Posterior cingulate gyrus (tissue), 11 donors: ENCODE measurements at regions of chr4 and their contacts with region 1.

Region 1: DNA sequence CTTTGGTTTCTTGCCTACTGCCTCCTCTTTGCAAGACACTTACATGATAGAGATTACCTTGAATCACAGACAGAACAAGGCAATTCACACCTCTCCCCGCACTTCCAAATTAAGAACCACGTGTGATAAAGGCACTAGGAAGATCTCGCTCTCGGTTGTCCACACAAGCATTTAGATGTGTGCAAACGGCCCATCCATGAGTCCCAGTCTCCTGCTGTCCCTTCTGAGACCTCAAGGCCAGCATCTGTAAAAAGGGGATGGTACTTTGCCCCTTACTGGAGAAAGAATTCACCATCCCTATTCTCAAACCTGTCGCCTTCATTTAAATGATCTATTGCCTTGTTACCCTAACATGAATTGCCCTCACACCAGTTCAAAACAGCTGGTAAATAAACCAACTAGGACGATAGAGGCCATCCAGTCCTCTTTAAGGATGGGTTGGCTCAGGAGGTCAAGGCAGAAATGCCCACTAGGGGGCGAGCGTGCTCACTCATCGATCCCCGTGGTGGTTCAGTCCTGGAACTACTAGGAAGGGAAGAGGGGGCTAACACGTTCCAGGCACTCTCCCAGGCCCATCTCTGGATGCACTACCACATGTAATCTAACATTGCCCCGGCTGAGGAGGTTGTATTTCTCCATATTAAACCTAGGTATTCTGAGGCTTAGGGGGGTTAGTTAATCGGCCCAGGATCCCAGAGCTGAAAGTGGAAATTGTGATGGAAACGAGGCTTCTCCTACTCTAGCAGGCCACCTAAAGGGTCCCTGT is 95.8 kb downstream of the DHX15 start:
- DNase-seq: peak in 9 of 10 donors; percentile 44 to 95 (median 86)

Region 2: DNA sequence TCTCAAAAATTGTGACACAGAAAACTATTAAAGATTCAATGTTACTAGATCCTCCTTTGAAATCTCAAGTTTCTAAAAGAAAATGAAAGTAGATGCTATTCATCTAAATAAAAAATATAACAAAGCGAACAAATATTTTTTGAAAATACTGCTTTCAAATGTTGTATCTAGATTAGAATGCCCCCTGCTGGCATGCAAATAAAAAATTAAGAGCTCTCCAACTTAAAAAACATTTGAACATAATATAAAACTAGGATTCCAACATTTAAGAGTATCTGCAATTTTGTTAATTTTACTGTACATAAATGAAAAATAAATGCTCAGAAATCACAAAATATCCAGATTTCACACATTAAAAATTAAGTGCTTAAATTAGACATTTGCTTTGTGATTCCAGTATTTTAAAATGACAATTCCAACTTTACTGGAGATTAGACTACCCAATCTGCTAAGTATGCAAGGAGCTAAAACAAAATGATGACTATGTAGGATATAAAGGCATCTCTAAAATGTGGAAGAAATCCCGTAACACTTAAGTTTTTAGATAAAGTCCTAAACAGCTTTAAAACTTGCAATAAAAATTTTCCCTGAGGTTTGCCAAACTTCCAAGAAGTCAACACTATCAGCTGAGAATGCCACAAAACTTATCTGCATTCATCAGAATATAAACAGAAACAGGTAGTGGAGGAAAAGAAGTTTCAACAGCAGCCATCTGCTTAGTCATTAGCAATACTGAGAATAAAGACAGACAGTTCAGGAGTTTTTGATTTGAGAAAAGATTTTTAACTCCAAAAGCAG is 63.1 kb after region 1 on chr4:
- intact Hi-C with region 1: loop called (anchors 5 kb)
- DNase-seq: no peak

Region 3: GRCh38 chr4:24570574-24571236 is 82.1 kb after region 1 on chr4:
- intact Hi-C with region 1: no loop called
- DNase-seq: no peak

Region 4: GRCh38 chr4:24704149-24704548 is 215.6 kb after region 1 on chr4:
- intact Hi-C with region 1: loop called (anchors 10 kb)
- DNase-seq: no peak

Region 5: GRCh38 chr4:24988776-24989175 is 500.2 kb after region 1 on chr4:
- intact Hi-C with region 1: loop called (anchors 5 kb)
- DNase-seq: no peak